Mucosa of descending colon (tissue), 3 donors: ENCODE measurements at regions of chr4 and their contacts with region 1.

Region 1: GRCh38 chr4:20773144-20773997 is 73.1 kb downstream of the PACRGL start:
- DNase-seq: peak in 2 of 3 donors; percentile 29 to 75
- ATAC-seq: peak; percentile 76
- H3K4me3 ChIP-seq: no peak overlapping the region
- H3K4me1 ChIP-seq: no peaks in the 10 kb centered on the region
- CTCF ChIP-seq: no peak

Region 2: DNA sequence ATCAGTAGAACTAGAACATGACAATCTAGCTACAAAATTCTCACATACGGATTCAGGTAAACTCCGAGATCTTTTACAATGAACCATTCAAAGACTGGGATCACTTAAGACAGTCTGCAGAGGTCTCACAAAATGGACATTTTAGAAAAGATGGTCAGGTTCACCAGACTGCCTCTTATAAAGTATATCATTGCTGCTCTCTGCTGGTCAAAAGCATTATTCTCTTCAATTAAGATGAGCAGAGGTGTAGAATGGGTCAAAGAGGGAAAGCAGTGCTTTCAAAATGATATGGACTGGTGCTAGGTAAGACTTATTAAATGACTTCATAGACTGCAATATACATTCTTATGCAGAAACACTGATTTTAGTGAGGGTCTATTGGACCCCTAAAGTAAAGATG is 361.6 kb after region 1 on chr4:
- intact Hi-C with region 1: loop called (anchors 5 kb)
- DNase-seq: peak in 1 of 3 donors; percentile 23
- ATAC-seq: peak; percentile 47
- H3K4me3 ChIP-seq: no peak overlapping the region
- H3K4me1 ChIP-seq: no peaks in the 10 kb centered on the region
- CTCF ChIP-seq: no peak